ENCODE measurements at regions of chr1 and their contacts with region 1.

Region 1: DNA sequence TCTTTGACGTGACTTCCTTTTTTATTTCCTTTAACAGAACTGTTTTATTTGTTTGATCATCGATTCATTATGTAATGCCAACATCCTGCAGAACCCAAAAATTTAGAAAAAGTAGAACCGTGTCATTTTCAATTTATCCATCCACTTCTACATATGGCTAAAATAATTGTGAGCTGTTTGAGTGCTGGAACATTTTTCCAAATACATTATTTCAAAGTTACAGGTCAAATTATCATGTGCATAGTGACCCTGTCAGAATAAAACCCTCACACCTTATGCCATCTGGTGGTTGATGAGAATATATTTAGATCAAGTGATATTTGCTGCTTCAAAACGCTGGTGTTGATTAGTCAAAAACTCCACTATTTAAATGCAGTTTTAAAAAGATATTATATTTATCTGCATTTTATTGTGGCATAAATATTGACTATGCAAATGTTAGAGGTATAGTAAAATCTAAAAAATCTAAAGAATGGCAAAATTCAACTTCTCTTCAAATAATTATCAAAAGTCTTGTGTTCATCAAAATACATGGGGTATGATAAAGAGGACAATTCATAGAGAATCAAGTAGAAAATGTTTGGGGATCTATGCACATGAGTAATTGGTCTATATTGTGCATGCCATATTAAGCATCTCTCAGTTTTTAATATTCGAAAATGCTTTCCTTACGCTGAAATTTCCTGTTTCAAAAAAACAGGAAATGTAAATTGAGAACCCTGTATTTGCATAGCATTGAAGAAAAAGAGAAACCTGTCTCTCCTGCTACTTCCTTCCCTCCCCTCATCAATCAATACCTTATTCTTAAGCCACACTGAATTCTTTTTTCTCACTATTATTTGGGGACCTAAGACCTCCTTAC is 39.7 kb downstream of the UBE2U start:
- DNase-seq: peak; percentile 46
- H3K4me3 ChIP-seq: no peak overlapping the region
- H3K27ac ChIP-seq: no peak overlapping the region
- H3K4me1 ChIP-seq: peaks cover 11% of the 10 kb centered on the region
- H3K27me3 ChIP-seq: peaks cover 7 to 11% of the 10 kb centered on the region in 2 experiments
- CTCF ChIP-seq: peak; percentile 5 to 11
- POLR2A ChIP-seq: no peak

Region 2: DNA sequence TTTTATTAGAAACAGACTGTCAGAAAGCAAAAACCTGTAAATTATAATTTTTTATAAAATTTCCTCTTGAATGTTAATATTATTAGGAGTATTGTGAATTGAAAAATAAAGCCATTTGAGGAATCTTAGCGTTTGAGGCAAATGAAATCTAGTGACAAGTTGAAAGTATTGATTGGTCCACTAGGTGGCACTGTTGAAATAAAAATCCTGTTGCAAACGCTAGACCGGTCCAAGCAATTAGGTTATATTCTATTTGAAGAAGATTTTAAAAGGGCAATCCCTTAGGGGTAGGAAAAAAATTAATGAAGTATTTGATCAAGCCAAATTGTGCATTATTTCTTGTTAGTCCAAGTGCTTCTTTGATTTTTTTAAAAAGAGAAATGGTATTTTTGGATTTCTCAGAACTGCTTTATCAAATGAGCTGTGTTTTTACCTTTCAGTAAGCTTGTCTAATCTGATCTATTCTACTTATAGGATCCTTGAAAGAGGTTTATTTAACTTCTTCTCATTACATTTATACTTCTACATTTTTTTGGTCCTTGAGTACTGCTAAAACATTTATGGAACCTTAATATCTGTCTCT is 1401.4 kb before region 1 on chr1:
- CTCF ChIA-PET with region 1: interaction called, 14 read pairs
- POLR2A ChIA-PET with region 1: no interaction called
- dilution Hi-C with region 1: no loop called
- intact Hi-C with region 1: no loop called
- DNase-seq: peak; percentile 70
- H3K4me3 ChIP-seq: no peak overlapping the region
- H3K27ac ChIP-seq: no peak overlapping the region
- H3K4me1 ChIP-seq: no peaks in the 10 kb centered on the region
- H3K27me3 ChIP-seq: no peaks in the 10 kb centered on the region
- CTCF ChIP-seq: peak; percentile 35 to 37
- POLR2A ChIP-seq: no peak

Region 3: GRCh38 chr1:63545780-63546179 is 697.3 kb before region 1 on chr1:
- CTCF ChIA-PET with region 1: no interaction called
- POLR2A ChIA-PET with region 1: no interaction called
- dilution Hi-C with region 1: no loop called
- intact Hi-C with region 1: no loop called
- DNase-seq: no peak
- H3K4me3 ChIP-seq: no peak overlapping the region
- H3K27ac ChIP-seq: no peak overlapping the region
- H3K4me1 ChIP-seq: no peaks in the 10 kb centered on the region
- H3K27me3 ChIP-seq: no peaks in the 10 kb centered on the region
- CTCF ChIP-seq: no peak
- POLR2A ChIP-seq: no peak

Region 4: GRCh38 chr1:63557365-63557987 is 685.6 kb before region 1 on chr1:
- CTCF ChIA-PET with region 1: interaction called, 68 read pairs
- POLR2A ChIA-PET with region 1: no interaction called
- dilution Hi-C with region 1: no loop called
- intact Hi-C with region 1: loop called (anchors 1 kb)
- DNase-seq: peak; percentile 52
- H3K4me3 ChIP-seq: no peak overlapping the region
- H3K27ac ChIP-seq: no peak overlapping the region
- H3K4me1 ChIP-seq: no peaks in the 10 kb centered on the region
- H3K27me3 ChIP-seq: no peaks in the 10 kb centered on the region
- CTCF ChIP-seq: peak; percentile 53 to 58
- POLR2A ChIP-seq: no peak

Region 5: DNA sequence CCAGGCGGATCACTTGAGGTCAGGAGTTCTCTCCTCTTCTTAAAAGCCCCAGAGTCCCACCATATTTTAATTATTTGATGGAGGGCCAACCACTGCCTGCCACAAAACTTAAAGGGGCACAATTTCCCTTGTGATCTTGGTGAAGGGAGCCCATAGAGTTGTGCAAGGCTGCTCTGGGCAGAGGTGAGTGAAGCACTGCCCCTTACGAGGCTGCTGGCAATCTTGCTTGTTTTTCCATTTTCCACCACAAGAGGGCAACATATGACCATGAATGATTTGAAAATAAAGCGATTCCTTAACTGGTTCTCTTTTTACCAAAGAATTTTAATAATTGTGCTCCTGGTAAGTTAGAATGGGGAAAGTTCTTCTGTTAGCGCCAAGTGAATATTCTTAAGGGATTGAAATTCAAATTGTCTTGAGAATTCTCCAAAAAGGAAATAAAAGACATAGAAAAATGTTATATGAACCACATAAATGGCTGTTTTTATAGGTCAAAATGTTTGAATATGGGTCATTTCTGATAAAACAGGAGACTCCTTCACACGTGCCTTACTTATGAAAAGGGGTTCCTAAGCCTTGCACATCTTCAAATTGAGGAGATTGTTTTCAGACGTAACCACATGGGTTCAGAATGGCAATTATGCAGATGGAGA is 627.2 kb before region 1 on chr1:
- CTCF ChIA-PET with region 1: interaction called, 53 read pairs
- POLR2A ChIA-PET with region 1: no interaction called
- dilution Hi-C with region 1: no loop called
- intact Hi-C with region 1: loop called (anchors 1 kb)
- DNase-seq: peak; percentile 82
- H3K4me3 ChIP-seq: no peak overlapping the region
- H3K27ac ChIP-seq: no peak overlapping the region
- H3K4me1 ChIP-seq: no peaks in the 10 kb centered on the region
- H3K27me3 ChIP-seq: no peaks in the 10 kb centered on the region
- CTCF ChIP-seq: peak; percentile 50 to 59
- POLR2A ChIP-seq: no peak

Region 6: GRCh38 chr1:63773815-63774616 is 469.1 kb before region 1 on chr1 and contains the start of gene ROR1:
- CTCF ChIA-PET with region 1: interaction called, 4 read pairs
- POLR2A ChIA-PET with region 1: no interaction called
- dilution Hi-C with region 1: no loop called
- intact Hi-C with region 1: loop called (anchors 1 kb)
- DNase-seq: peak; percentile 86
- H3K4me3 ChIP-seq: peak within 1 kb of the TSS; percentile 62 to 73 (median 72)
- H3K27ac ChIP-seq: peak within 1 kb of the TSS; percentile 40
- H3K4me1 ChIP-seq: peaks cover 15% of the 10 kb centered on the region
- H3K27me3 ChIP-seq: peaks cover 0 to 5% of the 10 kb centered on the region in 2 experiments
- CTCF ChIP-seq: peak; percentile 42 to 80
- POLR2A ChIP-seq: no peak
- total RNA-seq, gene ROR1: 3.5 and 10.9 TPM in 2 replicates

Region 7: DNA sequence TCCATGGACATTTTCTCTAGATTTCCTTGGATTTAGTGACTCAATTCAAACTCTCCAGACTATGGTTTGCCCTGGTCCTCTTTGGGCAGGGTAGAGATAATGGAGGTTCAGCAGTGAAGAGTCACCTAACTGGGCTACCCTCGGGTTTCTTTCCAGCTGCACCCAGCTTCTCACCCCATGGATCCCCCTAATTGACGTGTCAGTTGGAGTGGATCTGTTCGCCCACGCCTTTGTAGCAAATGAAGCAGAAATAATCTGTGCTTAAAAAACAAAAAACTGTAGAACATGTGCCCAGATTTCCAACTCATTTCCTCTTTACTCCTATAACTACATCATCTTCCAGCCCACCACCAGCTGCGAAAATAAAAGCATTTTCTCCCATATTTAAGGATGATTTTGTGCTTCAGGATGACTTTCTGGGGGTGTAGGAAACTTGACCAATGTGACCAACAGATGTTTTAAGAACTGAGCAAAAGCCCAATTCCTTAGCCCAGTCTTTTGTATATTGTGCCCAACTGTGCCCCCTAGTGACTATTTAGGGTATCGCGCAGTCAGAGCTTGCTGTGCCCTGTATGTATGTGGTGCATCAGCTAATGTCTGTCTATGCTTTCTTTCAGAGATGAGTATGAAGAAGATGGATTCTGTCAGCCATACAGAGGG is 106.2 kb before region 1 on chr1:
- CTCF ChIA-PET with region 1: interaction called, 21 read pairs
- POLR2A ChIA-PET with region 1: no interaction called
- dilution Hi-C with region 1: no loop called
- intact Hi-C with region 1: loop called (anchors 1 kb)
- DNase-seq: peak; percentile 82
- H3K4me3 ChIP-seq: no peak overlapping the region
- H3K27ac ChIP-seq: no peak overlapping the region
- H3K4me1 ChIP-seq: no peaks in the 10 kb centered on the region
- H3K27me3 ChIP-seq: no peaks in the 10 kb centered on the region
- CTCF ChIP-seq: peak; percentile 89
- POLR2A ChIP-seq: no peak

Region 8: DNA sequence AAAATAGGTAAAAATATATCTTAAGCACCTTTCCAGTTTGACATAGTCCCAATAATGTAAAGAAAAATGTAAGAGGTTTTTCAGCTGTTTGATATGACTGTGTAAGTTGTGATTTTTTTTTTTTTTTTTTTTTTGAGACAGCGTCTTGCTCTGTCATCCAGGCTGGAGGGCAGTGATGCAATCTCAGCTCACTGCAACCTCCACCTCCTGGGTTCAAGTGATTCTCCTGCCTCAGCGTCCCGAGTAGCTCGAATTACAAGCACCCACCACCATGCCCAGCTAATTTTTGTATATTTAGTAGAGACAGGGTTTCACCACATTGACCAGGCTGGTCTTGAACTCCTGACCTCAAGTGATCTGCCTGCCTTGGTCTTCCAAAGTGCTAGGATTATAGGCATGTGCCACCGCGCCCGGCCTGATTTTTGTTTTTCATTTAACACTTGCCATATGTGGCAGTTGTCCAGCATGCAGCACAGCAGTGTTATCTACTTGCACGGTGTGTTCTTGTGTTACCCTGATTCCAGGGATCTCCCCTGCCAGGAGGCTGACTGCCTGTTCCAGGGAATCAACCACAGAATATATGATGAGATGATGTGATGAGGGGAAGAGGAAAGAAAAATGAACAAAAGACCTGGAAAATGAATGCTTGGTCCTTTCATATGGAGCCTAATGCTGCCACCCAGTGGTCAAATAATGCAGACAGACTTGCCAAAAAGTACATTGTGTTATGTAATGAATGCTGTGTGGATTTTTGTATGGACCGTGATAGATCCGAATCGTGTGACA is 580.8 kb after region 1 on chr1:
- CTCF ChIA-PET with region 1: interaction called, 12 read pairs
- POLR2A ChIA-PET with region 1: no interaction called
- dilution Hi-C with region 1: no loop called
- intact Hi-C with region 1: no loop called
- DNase-seq: peak; percentile 81
- H3K4me3 ChIP-seq: no peak overlapping the region
- H3K27ac ChIP-seq: no peak overlapping the region
- H3K4me1 ChIP-seq: peaks cover 2% of the 10 kb centered on the region
- H3K27me3 ChIP-seq: no peaks in the 10 kb centered on the region
- CTCF ChIP-seq: peak; percentile 61 to 69
- POLR2A ChIP-seq: no peak

Measured in endothelial cell of umbilical vein (primary cell).